Activated naive CD4-positive, alpha-beta T cell treated with anti-CD3 and anti-CD28 coated beads for 36 hours (primary cell): ENCODE measurements at regions of chr19 and their contacts with region 1.

Region 1: DNA sequence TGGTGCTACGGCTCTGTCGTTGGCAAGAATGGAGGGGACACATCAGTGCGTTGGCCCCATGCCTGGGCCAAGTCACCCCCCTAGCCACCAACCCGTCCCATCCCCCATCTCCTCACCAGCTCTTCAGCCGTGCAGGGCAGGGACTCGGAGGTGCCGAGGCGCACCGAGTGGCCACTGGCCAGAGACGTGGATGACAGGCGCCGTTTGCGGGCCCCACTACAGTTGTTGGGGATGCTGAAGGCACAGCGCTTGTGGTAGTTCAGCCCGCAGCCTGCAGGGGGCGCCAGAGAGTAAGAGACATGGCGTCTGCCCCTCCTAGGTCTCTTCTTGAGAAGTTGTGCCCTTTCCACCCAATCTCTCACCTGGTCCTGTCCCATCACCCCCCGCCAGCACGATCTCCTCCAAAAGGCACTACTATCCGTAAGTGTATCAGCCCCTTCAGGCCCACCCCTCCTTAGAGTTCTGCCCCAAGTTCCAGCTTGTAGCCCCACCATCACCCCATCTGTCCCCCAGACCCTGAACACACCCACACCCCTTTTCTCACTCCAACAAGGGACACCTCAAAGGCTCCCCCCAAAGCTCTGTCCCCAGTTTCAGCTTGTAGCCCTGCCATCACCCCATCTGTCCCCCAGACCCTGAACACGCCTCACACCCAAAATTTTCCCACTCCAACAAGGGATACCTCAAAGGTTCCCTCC is 12.4 kb downstream of the PRKD2 start:
- DNase-seq: peak; percentile 93
- H3K4me3 Mint-ChIP-seq: no peak overlapping the region
- H3K27ac Mint-ChIP-seq: peak overlapping the region; percentile 56
- H3K4me1 Mint-ChIP-seq: peaks cover 7% of the 10 kb centered on the region
- H3K27me3 Mint-ChIP-seq: no peaks in the 10 kb centered on the region

Region 2: GRCh38 chr19:46692918-46693722 is 11.4 kb before region 1 on chr19:
- CTCF ChIA-PET with region 1: interaction called, 30 read pairs
- intact Hi-C with region 1: no loop called
- DNase-seq: no peak
- H3K4me3 Mint-ChIP-seq: no peak overlapping the region
- H3K27ac Mint-ChIP-seq: peak overlapping the region; percentile 50
- H3K4me1 Mint-ChIP-seq: no peaks in the 10 kb centered on the region
- H3K27me3 Mint-ChIP-seq: no peaks in the 10 kb centered on the region

Region 3: GRCh38 chr19:46717034-46717723 is 12.7 kb after region 1 on chr19 and contains the start of gene PRKD2:
- CTCF ChIA-PET with region 1: interaction called, 36 read pairs
- intact Hi-C with region 1: loop called (anchors 1 kb)
- DNase-seq: peak; percentile 93
- H3K4me3 Mint-ChIP-seq: peak within 1 kb of the TSS; percentile 96
- H3K27ac Mint-ChIP-seq: peak within 1 kb of the TSS; percentile 94
- H3K4me1 Mint-ChIP-seq: peaks cover 46% of the 10 kb centered on the region
- H3K27me3 Mint-ChIP-seq: no peaks in the 10 kb centered on the region
- total RNA-seq, gene PRKD2: 62.2 to 62.3 TPM

Region 4: DNA sequence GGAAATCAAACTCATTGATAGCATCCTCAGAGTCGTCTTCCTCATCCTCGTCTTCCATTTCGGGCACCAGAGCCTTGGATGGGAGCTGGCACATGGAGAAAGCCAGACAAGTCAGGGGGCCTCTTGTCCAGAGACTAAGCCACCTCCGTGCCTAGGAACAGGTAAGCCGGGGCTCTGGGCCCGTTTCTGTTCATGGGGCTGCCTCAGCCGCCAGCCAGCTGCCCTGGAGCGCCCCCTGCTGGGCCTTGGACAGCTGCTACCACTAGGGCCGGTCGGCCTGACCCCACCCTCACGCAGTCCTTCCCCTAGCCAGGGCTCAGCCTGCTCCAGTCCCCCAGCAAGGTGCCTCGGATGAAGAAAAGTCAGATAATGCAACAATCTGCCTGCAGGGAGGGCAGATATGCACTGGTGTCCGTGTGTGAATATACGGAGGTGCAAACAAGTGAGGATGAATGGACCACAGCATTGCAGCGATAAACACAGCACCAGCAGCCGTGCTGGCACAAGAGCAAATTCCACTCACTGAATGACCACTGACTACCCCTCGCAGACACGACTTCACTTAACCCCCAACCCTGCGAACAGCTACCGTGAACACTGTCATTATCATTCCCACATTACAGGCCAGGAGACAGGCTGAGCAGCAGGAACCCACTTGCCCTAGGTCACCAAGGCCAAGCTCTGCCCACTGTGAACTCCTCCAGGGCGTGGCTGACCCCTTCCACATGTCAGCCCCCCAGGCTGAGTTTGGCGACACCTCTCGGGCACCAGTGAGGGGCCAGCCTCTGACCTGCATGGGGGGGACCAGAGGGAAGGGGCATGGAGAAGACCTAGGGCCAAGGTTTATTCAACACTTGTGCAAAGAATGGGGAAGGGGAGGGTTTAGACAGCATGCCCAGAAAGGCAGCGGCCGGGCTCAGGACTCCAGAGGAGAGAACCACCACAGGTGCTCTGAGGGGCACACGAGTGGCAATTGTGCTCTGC is 24.5 kb after region 1 on chr19:
- CTCF ChIA-PET with region 1: interaction called, 81 read pairs
- intact Hi-C with region 1: loop called (anchors 1 kb)
- DNase-seq: peak; percentile 82
- H3K4me3 Mint-ChIP-seq: no peak overlapping the region
- H3K27ac Mint-ChIP-seq: no peak overlapping the region
- H3K4me1 Mint-ChIP-seq: peaks cover 14% of the 10 kb centered on the region
- H3K27me3 Mint-ChIP-seq: no peaks in the 10 kb centered on the region

Region 5: GRCh38 chr19:46748325-46749109 is 44.0 kb after region 1 on chr19:
- CTCF ChIA-PET with region 1: interaction called, 12 read pairs
- intact Hi-C with region 1: loop called (anchors 1 kb)
- DNase-seq: peak; percentile 86
- H3K4me3 Mint-ChIP-seq: no peak overlapping the region
- H3K27ac Mint-ChIP-seq: no peak overlapping the region
- H3K4me1 Mint-ChIP-seq: peaks cover 33% of the 10 kb centered on the region
- H3K27me3 Mint-ChIP-seq: no peaks in the 10 kb centered on the region

Region 6: GRCh38 chr19:46753420-46754155 is 49.1 kb after region 1 on chr19:
- CTCF ChIA-PET with region 1: interaction called, 12 read pairs
- intact Hi-C with region 1: loop called (anchors 1 kb)
- DNase-seq: peak; percentile 88
- H3K4me3 Mint-ChIP-seq: no peak overlapping the region
- H3K27ac Mint-ChIP-seq: no peak overlapping the region
- H3K4me1 Mint-ChIP-seq: peaks cover 5% of the 10 kb centered on the region
- H3K27me3 Mint-ChIP-seq: no peaks in the 10 kb centered on the region